ENCODE measurements at regions of chr5 and their contacts with region 1.

Region 1: GRCh38 chr5:178146020-178146820 is 7.5 kb downstream of the NHP2 start:
- DNase-seq: peak; percentile 67 to 87
- ATAC-seq: peak; percentile 71 to 95 (median 94)
- H3K4me3 ChIP-seq: no peak overlapping the region
- H3K4me3 Mint-ChIP-seq: no peak overlapping the region
- H3K27ac ChIP-seq: no peak overlapping the region
- H3K27ac Mint-ChIP-seq: no peak overlapping the region
- H3K4me1 ChIP-seq: no peaks in the 10 kb centered on the region
- H3K4me1 Mint-ChIP-seq: no peaks in the 10 kb centered on the region
- H3K27me3 ChIP-seq: no peaks in the 10 kb centered on the region
- H3K27me3 Mint-ChIP-seq: no peaks in the 10 kb centered on the region
- CTCF ChIP-seq: peak; percentile 77

Region 2: DNA sequence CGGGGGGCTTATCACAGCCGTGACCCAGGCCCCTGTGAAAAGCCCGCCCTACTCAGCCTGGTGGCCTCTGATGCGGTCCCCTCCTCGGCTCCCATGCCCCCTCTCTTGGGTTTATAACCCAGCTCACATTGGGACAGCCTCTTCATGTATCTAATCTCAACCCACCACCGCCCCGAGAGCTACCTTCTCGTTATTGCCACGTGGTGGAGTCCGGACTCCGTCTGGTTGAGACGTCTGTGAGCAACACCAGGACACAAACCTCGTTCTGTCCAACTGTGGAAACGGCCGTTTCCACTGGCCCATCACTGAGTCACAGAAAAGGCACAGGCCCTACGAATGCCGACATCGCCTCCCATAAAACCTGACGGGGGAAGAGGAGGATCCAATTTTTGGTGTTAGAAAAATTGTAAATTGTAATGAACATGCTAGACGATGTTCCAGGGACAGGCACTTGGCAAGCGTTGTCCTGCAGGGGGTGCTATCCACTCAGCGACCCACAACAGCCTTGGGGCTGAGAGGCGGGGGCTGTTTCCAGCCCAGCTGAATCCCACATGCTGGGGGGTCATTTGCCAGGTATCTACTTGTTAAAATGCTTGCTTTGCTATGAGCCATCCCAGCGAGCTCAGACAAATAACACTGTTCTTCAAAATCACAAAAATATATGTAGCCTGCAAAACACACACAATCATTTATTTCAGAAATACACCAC is 70.2 kb before region 1 on chr5:
- intact Hi-C with region 1: loop called (anchors 1 kb)
- DNase-seq: peak; percentile 72 to 91
- ATAC-seq: peak; percentile 75 to 97 (median 95)
- H3K4me3 ChIP-seq: no peak overlapping the region
- H3K4me3 Mint-ChIP-seq: no peak overlapping the region
- H3K27ac ChIP-seq: no peak overlapping the region
- H3K27ac Mint-ChIP-seq: no peak overlapping the region
- H3K4me1 ChIP-seq: peaks cover 4% of the 10 kb centered on the region
- H3K4me1 Mint-ChIP-seq: no peaks in the 10 kb centered on the region
- H3K27me3 ChIP-seq: peaks cover 5% of the 10 kb centered on the region
- H3K27me3 Mint-ChIP-seq: peaks cover 9 to 14% of the 10 kb centered on the region in 2 donors
- CTCF ChIP-seq: peak; percentile 97

Region 3: DNA sequence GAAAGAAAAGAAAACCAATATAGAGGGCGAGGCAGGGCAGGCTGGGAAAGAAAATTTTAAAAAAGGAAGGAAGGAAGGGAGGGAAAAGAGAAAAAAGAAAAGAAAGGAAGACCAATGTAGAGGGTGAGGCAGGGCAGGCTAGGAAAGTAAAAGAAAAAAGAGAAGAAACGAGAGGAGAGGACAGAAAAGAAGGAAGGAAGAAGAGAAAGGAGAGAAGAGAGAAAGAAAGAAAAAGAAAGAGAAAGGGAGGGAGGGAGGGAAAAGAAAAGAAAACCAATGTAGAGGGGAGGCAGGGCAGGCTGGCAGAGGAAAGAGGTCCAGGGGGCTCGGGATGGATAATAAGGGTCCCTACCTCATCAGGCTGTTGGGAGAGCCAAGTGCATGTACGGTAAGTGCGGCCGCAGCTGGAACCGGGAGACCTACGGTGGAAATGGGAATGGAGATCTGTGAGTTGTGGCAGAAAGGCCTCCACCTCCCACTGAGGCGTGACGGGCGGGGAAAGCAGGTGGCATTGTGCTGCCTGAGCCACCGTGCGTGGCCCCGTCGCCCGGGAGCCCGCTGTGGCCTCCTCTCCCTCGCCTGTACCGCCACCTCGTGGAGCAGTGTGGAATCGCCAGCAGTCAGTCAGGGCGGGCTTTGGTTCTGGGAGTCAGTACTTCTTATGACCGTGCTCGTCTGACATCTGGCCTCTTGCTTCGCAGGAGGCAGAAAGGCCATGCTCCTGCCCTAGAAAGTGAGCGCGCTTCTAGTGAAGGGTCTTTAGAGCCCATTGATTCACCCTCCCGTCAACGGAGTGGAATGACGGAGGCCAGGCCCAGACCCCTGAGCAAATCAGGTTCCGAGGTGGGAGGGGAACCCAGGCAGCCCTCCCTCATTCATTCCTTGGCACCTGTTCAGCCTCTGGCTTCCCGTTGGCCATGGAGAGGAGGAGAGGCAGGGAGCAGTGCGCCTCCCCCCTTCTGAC is 17.8 kb after region 1 on chr5:
- intact Hi-C with region 1: loop called (anchors 1 kb)
- DNase-seq: peak; percentile 91 to 94
- ATAC-seq: peak; percentile 99 to 100 (median 100)
- H3K4me3 ChIP-seq: no peak overlapping the region
- H3K4me3 Mint-ChIP-seq: no peak overlapping the region
- H3K27ac ChIP-seq: no peak overlapping the region
- H3K27ac Mint-ChIP-seq: no peak overlapping the region
- H3K4me1 ChIP-seq: peaks cover 8% of the 10 kb centered on the region
- H3K4me1 Mint-ChIP-seq: peaks cover 8 to 11% of the 10 kb centered on the region in 2 donors
- H3K27me3 ChIP-seq: peaks cover 8% of the 10 kb centered on the region
- H3K27me3 Mint-ChIP-seq: peaks cover 15 to 25% of the 10 kb centered on the region in 2 donors
- CTCF ChIP-seq: peak; percentile 94